Endothelial cell of umbilical vein (primary cell): ENCODE measurements at regions of chr12 and their contacts with region 1.

Region 1: DNA sequence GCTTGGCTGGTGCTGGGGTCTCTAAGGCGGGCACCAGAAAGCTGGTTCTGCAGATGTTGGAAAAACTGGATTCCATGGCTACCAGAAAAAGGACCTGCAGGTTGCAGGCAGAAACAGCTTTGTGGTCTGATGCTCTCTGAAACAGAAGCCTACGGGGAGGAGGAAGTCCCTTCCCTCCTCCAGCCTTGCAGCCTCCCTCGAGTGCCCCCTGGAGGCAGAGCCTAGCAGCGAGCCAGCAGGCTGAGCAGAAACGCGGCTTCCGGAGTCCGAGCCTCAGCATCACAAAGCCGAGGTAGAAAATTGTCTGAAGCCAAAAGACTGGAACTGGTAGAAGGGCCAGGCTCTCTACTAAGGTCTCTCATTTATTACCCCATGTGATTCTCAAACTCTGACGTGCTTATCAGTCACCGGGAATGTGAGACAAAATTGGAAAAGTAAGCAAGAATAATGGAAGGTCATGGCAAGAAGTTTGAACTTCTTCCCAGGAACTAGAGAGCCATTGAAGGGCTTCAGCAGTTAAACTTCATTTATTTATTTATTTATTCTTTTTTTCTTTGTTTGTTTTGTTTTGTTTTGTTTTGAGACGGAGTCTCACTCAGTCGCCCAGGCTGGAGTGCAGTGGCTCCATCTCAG is 82.2 kb upstream of the CPSF6 start:
- DNase-seq: peak; percentile 67
- H3K4me3 ChIP-seq: no peak overlapping the region
- H3K27ac ChIP-seq: no peak overlapping the region
- H3K4me1 ChIP-seq: no peaks in the 10 kb centered on the region
- H3K27me3 ChIP-seq: peaks cover 1 to 2% of the 10 kb centered on the region in 2 experiments
- CTCF ChIP-seq: peak; percentile 96 to 99
- POLR2A ChIP-seq: no peak

Region 2: DNA sequence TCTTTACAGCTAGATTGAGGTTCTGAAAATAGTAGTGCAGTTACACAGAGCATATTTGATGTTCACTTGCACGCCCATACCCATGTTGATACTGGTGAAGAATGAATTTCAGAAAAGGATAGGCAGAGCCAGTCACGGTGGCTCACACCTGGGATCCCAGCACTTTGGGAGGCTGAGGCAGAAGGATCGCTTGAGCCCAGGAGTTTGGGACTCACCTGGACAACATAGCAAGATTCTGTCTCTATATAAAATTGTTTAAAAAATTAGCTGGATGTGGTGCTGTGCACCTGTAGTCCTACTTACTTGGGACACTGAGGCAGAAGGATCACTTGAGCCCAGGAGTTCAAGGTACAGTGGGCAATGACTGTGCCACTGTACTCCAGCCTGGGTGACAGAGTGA is 292.5 kb before region 1 on chr12:
- CTCF ChIA-PET with region 1: interaction called, 7 read pairs
- POLR2A ChIA-PET with region 1: no interaction called
- dilution Hi-C with region 1: no loop called
- intact Hi-C with region 1: loop called (anchors 1 kb)
- DNase-seq: no peak
- H3K4me3 ChIP-seq: no peak overlapping the region
- H3K27ac ChIP-seq: no peak overlapping the region
- H3K4me1 ChIP-seq: no peaks in the 10 kb centered on the region
- H3K27me3 ChIP-seq: peaks cover 16 to 21% of the 10 kb centered on the region in 2 experiments
- CTCF ChIP-seq: no peak
- POLR2A ChIP-seq: no peak

Region 3: GRCh38 chr12:69097619-69098368 is 59.3 kb before region 1 on chr12:
- CTCF ChIA-PET with region 1: interaction called, 5 read pairs
- POLR2A ChIA-PET with region 1: no interaction called
- dilution Hi-C with region 1: no loop called
- intact Hi-C with region 1: loop called (anchors 2 kb)
- DNase-seq: peak; percentile 52
- H3K4me3 ChIP-seq: no peak overlapping the region
- H3K27ac ChIP-seq: peak overlapping the region; percentile 48
- H3K4me1 ChIP-seq: peaks cover 27% of the 10 kb centered on the region
- H3K27me3 ChIP-seq: peaks cover 8 to 17% of the 10 kb centered on the region in 2 experiments
- CTCF ChIP-seq: no peak
- POLR2A ChIP-seq: no peak

Region 4: DNA sequence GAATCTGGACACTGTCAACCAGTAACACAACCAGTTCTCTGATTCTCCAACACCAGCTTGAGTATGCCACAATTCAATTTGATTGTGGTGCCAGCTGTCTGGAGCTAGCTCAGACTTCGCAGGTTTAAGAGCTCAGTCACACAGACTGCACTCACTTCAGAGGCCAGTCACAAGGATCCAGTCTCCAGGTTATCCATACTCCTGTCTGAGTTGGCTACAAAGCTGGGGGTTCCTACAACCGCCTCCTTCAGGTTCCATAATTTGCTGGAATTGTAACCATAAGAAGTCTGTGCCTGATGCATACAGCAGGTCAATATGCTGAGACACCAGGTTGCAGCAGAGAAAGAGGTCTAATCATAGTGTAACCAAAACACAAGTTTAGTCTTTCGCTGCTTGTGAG is 11.7 kb after region 1 on chr12:
- CTCF ChIA-PET with region 1: interaction called, 11 read pairs
- POLR2A ChIA-PET with region 1: no interaction called
- dilution Hi-C with region 1: no loop called
- intact Hi-C with region 1: no loop called
- DNase-seq: no peak
- H3K4me3 ChIP-seq: no peak overlapping the region
- H3K27ac ChIP-seq: no peak overlapping the region
- H3K4me1 ChIP-seq: no peaks in the 10 kb centered on the region
- H3K27me3 ChIP-seq: peaks cover 2 to 8% of the 10 kb centered on the region in 2 experiments
- CTCF ChIP-seq: no peak
- POLR2A ChIP-seq: no peak

Region 5: GRCh38 chr12:69527506-69528272 is 370.6 kb after region 1 on chr12:
- CTCF ChIA-PET with region 1: no interaction called
- POLR2A ChIA-PET with region 1: no interaction called
- dilution Hi-C with region 1: no loop called
- intact Hi-C with region 1: no loop called
- DNase-seq: peak; percentile 33
- H3K4me3 ChIP-seq: no peak overlapping the region
- H3K27ac ChIP-seq: no peak overlapping the region
- H3K4me1 ChIP-seq: peaks cover 10% of the 10 kb centered on the region
- H3K27me3 ChIP-seq: no peaks in the 10 kb centered on the region
- CTCF ChIP-seq: no peak
- POLR2A ChIP-seq: no peak

Region 6: DNA sequence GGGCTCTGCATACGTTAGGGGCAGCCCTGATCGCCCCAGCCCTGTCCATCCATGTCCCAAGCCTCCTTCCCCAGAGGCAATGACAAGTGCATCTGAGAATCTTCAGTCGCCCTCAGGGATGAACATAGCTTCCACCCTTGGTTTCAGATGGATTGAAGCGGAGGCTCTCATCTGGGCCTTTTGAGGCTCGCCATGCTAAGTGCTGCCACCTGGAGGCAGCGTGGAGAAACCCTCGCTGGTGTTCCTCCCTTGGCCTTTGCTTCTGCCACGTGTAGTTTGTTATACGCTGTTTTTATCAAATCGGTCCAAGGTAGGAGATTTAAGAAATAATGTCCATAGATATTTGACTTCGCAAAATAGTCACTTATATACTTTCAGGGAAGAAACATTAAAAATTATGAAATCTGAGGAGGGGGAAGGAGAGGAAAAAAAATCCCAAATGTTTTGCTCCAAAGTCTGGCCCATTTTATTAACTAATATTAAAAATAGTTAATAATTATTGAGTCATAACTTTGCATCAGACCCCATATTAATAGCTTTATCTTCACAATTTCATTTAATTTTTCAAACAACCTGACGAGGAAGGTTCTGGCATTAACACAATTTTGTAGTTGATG is 482.4 kb after region 1 on chr12:
- CTCF ChIA-PET with region 1: interaction called, 7 read pairs
- POLR2A ChIA-PET with region 1: no interaction called
- dilution Hi-C with region 1: no loop called
- intact Hi-C with region 1: loop called (anchors 1 kb)
- DNase-seq: peak; percentile 66
- H3K4me3 ChIP-seq: no peak overlapping the region
- H3K27ac ChIP-seq: no peak overlapping the region
- H3K4me1 ChIP-seq: no peaks in the 10 kb centered on the region
- H3K27me3 ChIP-seq: no peaks in the 10 kb centered on the region
- CTCF ChIP-seq: peak; percentile 85 to 91
- POLR2A ChIP-seq: no peak